ENCODE measurements at regions of chr4 and their contacts with region 1.

Region 1: DNA sequence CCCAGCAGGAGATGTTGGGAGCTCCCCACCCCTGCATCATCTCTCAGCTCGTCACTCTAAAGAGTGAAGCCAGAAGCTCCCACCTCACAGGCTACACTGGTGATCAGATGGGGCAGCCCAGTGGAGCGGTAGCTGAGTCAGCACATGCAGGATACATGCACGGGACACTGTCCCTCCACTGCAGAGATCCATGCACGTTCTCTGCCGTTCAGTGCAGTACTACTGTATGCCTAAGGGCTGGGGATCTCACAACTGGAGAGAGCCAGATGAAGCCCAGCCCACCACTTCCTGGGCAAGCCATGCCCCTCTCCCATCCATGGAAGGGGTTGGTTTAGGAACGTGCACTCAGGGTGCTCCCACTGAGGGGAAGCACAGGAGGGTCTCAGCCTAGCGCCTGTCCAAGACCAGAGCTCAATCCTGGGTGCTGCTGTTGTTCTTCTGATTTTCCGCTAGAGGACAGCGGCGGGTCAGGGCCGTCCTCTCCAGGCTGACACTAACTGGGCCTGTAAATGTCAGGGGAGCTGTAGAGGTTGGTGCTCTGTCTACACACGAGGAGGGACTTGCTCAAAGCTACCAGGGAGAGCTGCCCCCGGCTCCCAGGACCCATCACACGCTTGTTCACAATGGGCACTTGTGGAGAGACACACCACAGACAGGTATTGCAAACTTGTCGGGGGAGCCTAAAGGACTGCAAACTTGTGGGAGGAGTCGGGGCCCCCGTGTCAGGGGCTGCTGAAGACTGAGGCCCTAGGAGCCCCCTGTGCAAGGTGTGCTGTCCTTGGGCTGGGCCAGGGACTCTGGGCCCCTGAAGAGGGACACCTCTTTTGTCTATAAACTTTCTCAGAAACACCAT is 18.2 kb upstream of the ABLIM2 start:
- DNase-seq: peak in 3 of 5 donors; percentile 36 to 66 (median 48)
- H3K4me3 ChIP-seq: no peak overlapping the region
- H3K4me3 Mint-ChIP-seq: no peak overlapping the region
- H3K27ac ChIP-seq: no peak overlapping the region
- H3K27ac Mint-ChIP-seq: peak overlapping the region in 1 of 8 donors; percentile 5
- H3K4me1 ChIP-seq: no peaks in the 10 kb centered on the region
- H3K4me1 Mint-ChIP-seq: peaks cover 0 to 7% (median 4%) of the 10 kb centered on the region in 3 donors
- H3K27me3 ChIP-seq: no peaks in the 10 kb centered on the region
- H3K27me3 Mint-ChIP-seq: peaks cover 2 to 5% of the 10 kb centered on the region in 2 donors

Region 2: GRCh38 chr4:7910952-7911578 is 265.7 kb before region 1 on chr4:
- CTCF ChIA-PET with region 1: no interaction called
- POLR2A ChIA-PET with region 1: no interaction called
- DNase-seq: no peak
- H3K4me3 ChIP-seq: no peak overlapping the region
- H3K4me3 Mint-ChIP-seq: no peak overlapping the region
- H3K27ac ChIP-seq: no peak overlapping the region
- H3K27ac Mint-ChIP-seq: peak overlapping the region in 1 of 8 donors; percentile 19
- H3K4me1 ChIP-seq: no peaks in the 10 kb centered on the region
- H3K4me1 Mint-ChIP-seq: peaks cover 19 to 48% (median 33%) of the 10 kb centered on the region in 3 donors
- H3K27me3 ChIP-seq: no peaks in the 10 kb centered on the region
- H3K27me3 Mint-ChIP-seq: peaks cover 0 to 3% of the 10 kb centered on the region in 2 donors

Region 3: GRCh38 chr4:8158710-8159536 is 17.9 kb before region 1 on chr4 and contains the start of gene ABLIM2:
- CTCF ChIA-PET with region 1: interaction called, 14 read pairs
- POLR2A ChIA-PET with region 1: no interaction called
- DNase-seq: peak; percentile 98 to 100 (median 99)
- H3K4me3 ChIP-seq: peak within 1 kb of the TSS; percentile 77
- H3K4me3 Mint-ChIP-seq: peak within 1 kb of the TSS; percentile 87 to 100 (median 96)
- H3K27ac ChIP-seq: no peak within 1 kb of the TSS
- H3K27ac Mint-ChIP-seq: peak within 1 kb of the TSS; percentile 36 to 99 (median 92)
- H3K4me1 ChIP-seq: peaks cover 15% of the 10 kb centered on the region
- H3K4me1 Mint-ChIP-seq: peaks cover 14 to 24% (median 23%) of the 10 kb centered on the region in 3 donors
- H3K27me3 ChIP-seq: no peaks in the 10 kb centered on the region
- H3K27me3 Mint-ChIP-seq: peaks cover 3 to 4% of the 10 kb centered on the region in 2 donors
- total RNA-seq, gene ABLIM2: 0.72 to 1.1 TPM

Region 4: DNA sequence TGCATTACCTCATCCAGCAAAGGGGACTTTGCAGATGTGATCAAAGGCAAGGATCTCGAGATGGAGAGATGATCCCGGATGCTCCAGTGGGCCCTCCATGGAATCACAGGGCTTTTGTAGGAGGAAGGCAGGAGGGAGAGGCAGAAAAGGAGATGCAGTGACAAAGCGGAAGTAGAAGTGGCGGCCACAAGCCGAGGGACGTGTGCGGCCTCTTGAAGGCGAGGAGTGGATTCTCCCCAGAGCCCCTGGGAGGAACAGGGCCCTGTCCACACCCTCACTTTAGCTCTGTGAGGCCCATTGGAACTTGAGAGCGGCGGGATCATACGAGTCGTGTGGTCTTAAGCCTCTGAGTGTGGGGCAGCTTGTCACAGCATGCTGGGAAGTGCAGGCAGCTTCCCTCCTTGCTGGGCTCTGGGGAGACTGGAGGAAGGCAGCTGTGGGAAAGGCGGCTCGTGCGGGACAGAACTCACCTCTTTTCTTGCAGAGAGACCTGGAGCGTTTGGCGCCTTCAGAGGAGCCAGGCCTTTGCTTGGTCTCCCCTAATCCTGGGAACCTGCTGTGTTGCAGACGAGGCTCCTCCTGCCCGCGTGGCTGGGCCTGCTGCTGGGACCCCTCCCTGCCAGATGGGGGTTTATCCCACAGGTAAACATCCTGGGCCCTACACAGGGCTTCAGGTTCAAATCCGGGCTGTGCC is 32.6 kb after region 1 on chr4:
- CTCF ChIA-PET with region 1: no interaction called
- POLR2A ChIA-PET with region 1: no interaction called
- DNase-seq: no peak
- H3K4me3 ChIP-seq: no peak overlapping the region
- H3K4me3 Mint-ChIP-seq: no peak overlapping the region
- H3K27ac ChIP-seq: no peak overlapping the region
- H3K27ac Mint-ChIP-seq: no peak overlapping the region
- H3K4me1 ChIP-seq: no peaks in the 10 kb centered on the region
- H3K4me1 Mint-ChIP-seq: peaks cover 6 to 17% (median 12%) of the 10 kb centered on the region in 3 donors
- H3K27me3 ChIP-seq: no peaks in the 10 kb centered on the region
- H3K27me3 Mint-ChIP-seq: no peaks in the 10 kb centered on the region

Region 5: DNA sequence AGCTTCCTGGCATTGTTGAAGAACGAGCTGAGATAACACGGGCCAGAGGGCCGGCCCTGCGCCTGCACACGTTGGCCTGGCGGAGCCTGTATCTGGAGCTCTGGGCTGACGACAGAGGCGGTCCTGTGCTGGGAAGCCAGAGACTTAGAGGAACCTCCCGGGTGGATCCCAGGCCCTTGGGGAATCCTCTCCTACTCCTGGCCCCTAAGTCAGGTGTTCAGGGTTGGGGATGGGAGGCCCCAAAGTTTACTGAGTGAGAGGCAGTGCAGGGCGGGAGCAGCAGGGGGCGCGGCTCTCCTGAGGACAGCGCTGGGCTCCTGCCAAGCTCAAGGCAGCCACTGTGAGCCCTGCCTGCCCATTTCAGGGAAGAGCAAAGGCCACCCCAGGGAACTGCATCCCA is 90.3 kb after region 1 on chr4:
- CTCF ChIA-PET with region 1: no interaction called
- POLR2A ChIA-PET with region 1: no interaction called
- DNase-seq: no peak
- H3K4me3 ChIP-seq: no peak overlapping the region
- H3K4me3 Mint-ChIP-seq: no peak overlapping the region
- H3K27ac ChIP-seq: no peak overlapping the region
- H3K27ac Mint-ChIP-seq: no peak overlapping the region
- H3K4me1 ChIP-seq: no peaks in the 10 kb centered on the region
- H3K4me1 Mint-ChIP-seq: no peaks in the 10 kb centered on the region
- H3K27me3 ChIP-seq: no peaks in the 10 kb centered on the region
- H3K27me3 Mint-ChIP-seq: peaks cover 11 to 37% of the 10 kb centered on the region in 2 donors

Region 6: DNA sequence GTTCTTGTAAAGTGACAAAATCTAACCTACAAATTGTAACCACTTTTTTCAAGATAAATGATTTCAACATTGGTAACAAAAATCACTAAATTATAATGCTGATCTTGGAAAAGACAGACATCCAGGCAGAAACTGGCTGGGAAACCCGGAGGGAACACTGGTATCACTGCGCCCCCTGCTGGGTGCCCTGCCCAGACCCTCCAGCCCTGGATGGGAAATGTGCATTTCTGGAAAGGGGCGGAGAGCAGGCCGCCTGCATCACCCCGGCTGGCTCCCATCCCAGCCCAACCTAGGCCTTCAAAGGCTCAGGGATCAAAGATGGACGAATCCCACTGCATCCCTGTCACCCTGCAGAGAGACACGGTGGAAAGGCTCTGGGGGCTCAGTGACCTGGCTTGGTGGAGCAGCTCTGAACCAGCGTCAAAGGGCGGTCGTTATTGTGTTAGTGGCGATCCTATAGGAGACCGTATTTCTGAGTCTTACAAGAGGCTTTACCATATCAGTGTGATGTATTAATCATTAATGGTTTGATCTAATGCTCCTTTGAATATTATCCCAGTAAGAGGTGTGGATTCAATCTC is 226.5 kb after region 1 on chr4:
- CTCF ChIA-PET with region 1: interaction called, 15 read pairs
- POLR2A ChIA-PET with region 1: no interaction called
- DNase-seq: peak in 4 of 5 donors; percentile 11 to 36 (median 34)
- H3K4me3 ChIP-seq: no peak overlapping the region
- H3K4me3 Mint-ChIP-seq: no peak overlapping the region
- H3K27ac ChIP-seq: no peak overlapping the region
- H3K27ac Mint-ChIP-seq: no peak overlapping the region
- H3K4me1 ChIP-seq: no peaks in the 10 kb centered on the region
- H3K4me1 Mint-ChIP-seq: no peaks in the 10 kb centered on the region
- H3K27me3 ChIP-seq: no peaks in the 10 kb centered on the region
- H3K27me3 Mint-ChIP-seq: no peaks in the 10 kb centered on the region

Measured in CD8-positive, alpha-beta memory T cell (primary cell).